ENCODE measurements at regions of chr2 and their contacts with region 1.

Region 1: DNA sequence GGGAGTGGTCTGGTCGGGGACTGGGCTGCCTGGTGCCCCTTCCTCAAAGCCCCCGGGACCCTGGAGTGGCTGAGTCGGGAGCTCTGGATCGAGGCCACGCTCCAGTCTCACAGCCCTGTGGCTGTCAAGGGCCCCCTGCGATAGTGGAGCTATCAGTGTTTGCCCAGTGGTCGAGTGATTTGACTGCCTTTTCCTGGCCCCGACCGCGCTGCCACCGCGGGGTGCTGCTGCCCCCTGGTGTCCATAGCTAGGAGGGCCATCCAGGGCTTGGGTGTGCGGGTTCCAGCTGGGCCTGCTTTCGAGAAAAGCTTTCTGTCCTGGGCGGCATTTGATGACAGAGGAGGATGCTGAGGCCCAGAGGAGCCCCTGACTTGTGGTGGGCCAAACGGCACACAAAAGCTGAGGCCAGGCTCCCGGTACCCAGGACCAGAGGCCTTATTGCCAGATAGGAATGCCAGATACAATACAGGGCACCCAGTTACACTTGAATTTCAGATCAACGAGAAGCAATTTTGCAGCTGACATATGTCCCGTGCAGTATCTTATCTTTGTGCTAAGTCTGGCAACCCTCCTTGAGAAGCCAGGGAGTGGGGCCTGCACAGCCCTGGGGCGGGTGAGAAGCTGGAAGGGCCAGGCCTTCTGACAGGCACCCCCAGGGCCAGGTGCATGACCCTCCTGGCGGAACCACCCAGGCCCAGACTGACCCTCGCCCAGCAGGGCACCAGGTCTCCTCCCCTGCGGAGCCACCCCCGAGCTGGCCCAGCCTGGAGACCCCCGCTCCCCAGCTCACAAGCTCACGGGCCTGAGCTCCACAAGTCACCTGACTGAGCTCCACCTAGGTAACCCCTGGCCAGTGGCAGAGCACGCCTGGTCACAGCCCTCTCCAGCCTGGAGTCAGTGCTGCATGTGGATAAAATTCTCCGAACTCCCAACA is 13.0 kb downstream of the ODC1 start:
- DNase-seq: peak; percentile 62 to 84
- H3K4me3 ChIP-seq: no peak overlapping the region
- H3K27ac ChIP-seq: no peak overlapping the region
- H3K4me1 ChIP-seq: no peaks in the 10 kb centered on the region; the same call in 1 of the 2 replicates
- H3K27me3 ChIP-seq: no peaks in the 10 kb centered on the region
- CTCF ChIP-seq: peak; percentile 97

Region 2: GRCh38 chr2:10267551-10268465 is 167.3 kb before region 1 on chr2:
- CTCF ChIA-PET with region 1: interaction called, 3 read pairs
- POLR2A ChIA-PET with region 1: no interaction called
- intact Hi-C with region 1: loop called (anchors 1 kb)
- DNase-seq: no peak
- H3K4me3 ChIP-seq: no peak overlapping the region
- H3K27ac ChIP-seq: no peak overlapping the region
- H3K4me1 ChIP-seq: peaks cover 22% of the 10 kb centered on the region
- H3K27me3 ChIP-seq: no peaks in the 10 kb centered on the region
- CTCF ChIP-seq: no peak

Region 3: DNA sequence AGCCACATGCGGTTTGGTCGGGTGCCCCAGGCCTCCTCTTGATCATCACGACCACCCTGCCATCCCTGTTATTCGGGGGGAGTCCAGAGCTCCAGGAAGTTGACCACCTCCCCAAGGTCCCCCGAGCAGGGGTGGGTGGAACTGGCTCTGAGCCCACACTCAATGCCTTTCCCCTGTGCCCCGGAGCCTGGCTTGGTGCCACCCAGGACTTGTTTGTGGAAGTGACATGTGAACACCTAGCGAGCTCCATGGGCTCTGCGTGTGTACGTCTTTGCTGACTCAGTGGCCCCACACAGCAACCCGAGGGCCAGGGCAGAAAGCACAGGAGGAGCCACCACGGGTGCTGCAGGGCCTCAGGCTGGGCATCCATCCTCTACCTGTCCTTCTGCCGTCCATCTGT is 19.5 kb before region 1 on chr2:
- CTCF ChIA-PET with region 1: no interaction called
- POLR2A ChIA-PET with region 1: no interaction called
- intact Hi-C with region 1: no loop called
- DNase-seq: no peak
- H3K4me3 ChIP-seq: no peak overlapping the region
- H3K27ac ChIP-seq: no peak overlapping the region
- H3K4me1 ChIP-seq: peaks cover 25% of the 10 kb centered on the region
- H3K27me3 ChIP-seq: no peaks in the 10 kb centered on the region
- CTCF ChIP-seq: no peak

Region 4: GRCh38 chr2:10467401-10467800 is 32.2 kb after region 1 on chr2:
- CTCF ChIA-PET with region 1: no interaction called
- POLR2A ChIA-PET with region 1: no interaction called
- intact Hi-C with region 1: no loop called
- DNase-seq: no peak
- H3K4me3 ChIP-seq: no peak overlapping the region
- H3K27ac ChIP-seq: no peak overlapping the region
- H3K4me1 ChIP-seq: no peaks in the 10 kb centered on the region
- H3K27me3 ChIP-seq: no peaks in the 10 kb centered on the region
- CTCF ChIP-seq: no peak

Measured in PC-9 (cell line).